Natural killer cell (primary cell): ENCODE measurements at regions of chr1 and their contacts with region 1.

Region 1: DNA sequence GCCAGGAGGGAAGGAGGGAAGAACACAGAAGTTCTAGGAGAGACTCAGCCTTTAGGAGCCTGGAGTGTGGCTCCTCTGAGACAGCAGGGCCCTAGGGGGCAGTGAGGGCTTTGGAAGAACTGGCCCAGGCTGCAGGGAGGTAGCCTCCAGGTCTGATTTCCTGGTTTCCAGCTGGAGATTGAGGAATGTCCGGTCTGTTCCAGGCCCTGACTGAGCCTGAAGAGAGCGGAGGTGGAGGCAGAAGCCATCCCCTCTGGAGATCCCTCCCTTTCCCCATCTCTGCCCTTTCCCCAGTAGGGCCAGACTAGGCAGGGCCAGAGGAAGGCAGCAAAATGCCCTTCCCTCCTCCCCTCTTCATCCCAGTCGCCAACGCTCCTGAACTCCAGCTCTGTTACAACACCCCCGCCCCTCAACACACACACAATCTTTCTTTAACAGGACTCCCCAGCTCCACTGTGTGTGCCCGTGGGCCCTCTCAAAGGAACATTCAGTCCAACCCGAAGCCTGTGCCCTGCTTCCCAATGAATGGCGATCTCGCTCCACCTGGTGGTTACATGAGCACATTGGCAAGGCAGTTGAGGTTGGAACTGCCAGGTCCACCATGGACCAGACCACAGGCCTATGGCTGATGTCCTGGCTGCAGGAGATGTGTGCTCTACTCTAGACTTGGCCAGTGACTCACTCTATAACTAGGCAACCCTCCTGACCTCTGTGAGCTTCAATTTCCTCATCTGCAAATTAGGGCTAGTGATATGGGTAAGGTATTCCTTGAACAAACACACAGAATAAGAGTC is 32.0 kb downstream of the MAP7D1 start:
- DNase-seq: peak; percentile 69 to 93
- ATAC-seq: peak; percentile 97 to 99 (median 98)
- H3K4me3 ChIP-seq: no peak overlapping the region
- H3K4me3 Mint-ChIP-seq: no peak overlapping the region
- H3K27ac ChIP-seq: no peak overlapping the region
- H3K27ac Mint-ChIP-seq: peak overlapping the region; percentile 47 to 89
- H3K4me1 ChIP-seq: peaks cover 9% of the 10 kb centered on the region
- H3K4me1 Mint-ChIP-seq: peaks cover 6 to 10% of the 10 kb centered on the region in 2 donors
- H3K27me3 ChIP-seq: no peaks in the 10 kb centered on the region
- H3K27me3 Mint-ChIP-seq: no peaks in the 10 kb centered on the region
- CTCF ChIP-seq: peak; percentile 77

Region 2: GRCh38 chr1:35675773-35676172 is 512.2 kb before region 1 on chr1:
- intact Hi-C with region 1: no loop called
- DNase-seq: no peak
- ATAC-seq: no peak
- H3K4me3 ChIP-seq: no peak overlapping the region
- H3K4me3 Mint-ChIP-seq: no peak overlapping the region
- H3K27ac ChIP-seq: no peak overlapping the region
- H3K27ac Mint-ChIP-seq: no peak overlapping the region
- H3K4me1 ChIP-seq: no peaks in the 10 kb centered on the region
- H3K4me1 Mint-ChIP-seq: no peaks in the 10 kb centered on the region
- H3K27me3 ChIP-seq: no peaks in the 10 kb centered on the region
- H3K27me3 Mint-ChIP-seq: peaks cover 0 to 12% of the 10 kb centered on the region in 2 donors
- CTCF ChIP-seq: no peak

Region 3: GRCh38 chr1:36099681-36100341 is 88.2 kb before region 1 on chr1:
- intact Hi-C with region 1: loop called (anchors 1 kb)
- DNase-seq: peak; percentile 68 to 86
- ATAC-seq: peak; percentile 81 to 92 (median 89)
- H3K4me3 ChIP-seq: no peak overlapping the region
- H3K4me3 Mint-ChIP-seq: no peak overlapping the region
- H3K27ac ChIP-seq: no peak overlapping the region
- H3K27ac Mint-ChIP-seq: no peak overlapping the region
- H3K4me1 ChIP-seq: peaks cover 10% of the 10 kb centered on the region
- H3K4me1 Mint-ChIP-seq: peaks cover 0 to 5% of the 10 kb centered on the region in 2 donors
- H3K27me3 ChIP-seq: no peaks in the 10 kb centered on the region
- H3K27me3 Mint-ChIP-seq: no peaks in the 10 kb centered on the region
- CTCF ChIP-seq: peak; percentile 83

Region 4: GRCh38 chr1:36223993-36224536 is 36.1 kb after region 1 on chr1 and contains the start of gene THRAP3:
- intact Hi-C with region 1: loop called (anchors 5 kb)
- DNase-seq: peak; percentile 99 to 100
- ATAC-seq: peak; percentile 83 to 94 (median 84)
- H3K4me3 ChIP-seq: peak within 1 kb of the TSS; percentile 78
- H3K4me3 Mint-ChIP-seq: peak within 1 kb of the TSS; percentile 98
- H3K27ac ChIP-seq: peak within 1 kb of the TSS; percentile 95
- H3K27ac Mint-ChIP-seq: peak within 1 kb of the TSS; percentile 99 to 100
- H3K4me1 ChIP-seq: peaks cover 25% of the 10 kb centered on the region
- H3K4me1 Mint-ChIP-seq: peaks cover 38 to 44% of the 10 kb centered on the region in 2 donors
- H3K27me3 ChIP-seq: no peaks in the 10 kb centered on the region
- H3K27me3 Mint-ChIP-seq: no peaks in the 10 kb centered on the region
- CTCF ChIP-seq: no peak
- total RNA-seq, gene THRAP3: 88.6 to 110 (median 97.4) TPM

Region 5: GRCh38 chr1:36638268-36638667 is 450.3 kb after region 1 on chr1:
- intact Hi-C with region 1: no loop called
- DNase-seq: no peak
- ATAC-seq: no peak
- H3K4me3 ChIP-seq: no peak overlapping the region
- H3K4me3 Mint-ChIP-seq: no peak overlapping the region
- H3K27ac ChIP-seq: no peak overlapping the region
- H3K27ac Mint-ChIP-seq: no peak overlapping the region
- H3K4me1 ChIP-seq: no peaks in the 10 kb centered on the region
- H3K4me1 Mint-ChIP-seq: no peaks in the 10 kb centered on the region
- H3K27me3 ChIP-seq: no peaks in the 10 kb centered on the region
- H3K27me3 Mint-ChIP-seq: peaks cover 0 to 11% of the 10 kb centered on the region in 2 donors
- CTCF ChIP-seq: no peak